Naive thymus-derived CD4-positive, alpha-beta T cell (primary cell): ENCODE measurements at regions of chr2 and their contacts with region 1.

Region 1: GRCh38 chr2:98465456-98466226 is 21.0 kb downstream of the INPP4A start:
- DNase-seq: peak; percentile 53 to 92 (median 85)
- ATAC-seq: peak; percentile 74
- H3K4me3 ChIP-seq: peak overlapping the region; percentile 61
- H3K4me3 Mint-ChIP-seq: peak overlapping the region; percentile 78 to 98 (median 87)
- H3K27ac ChIP-seq: peak overlapping the region; percentile 85
- H3K27ac Mint-ChIP-seq: peak overlapping the region; percentile 93 to 99 (median 96)
- H3K4me1 ChIP-seq: peaks cover 85 to 87% of the 10 kb centered on the region in 2 donors
- H3K4me1 Mint-ChIP-seq: peaks cover 70 to 95% (median 88%) of the 10 kb centered on the region in 7 donors
- H3K27me3 ChIP-seq: no peaks in the 10 kb centered on the region
- H3K27me3 Mint-ChIP-seq: no peaks in the 10 kb centered on the region

Region 2: GRCh38 chr2:98438190-98439133 is 27.2 kb before region 1 on chr2:
- CTCF ChIA-PET with region 1: no interaction called
- POLR2A ChIA-PET with region 1: interaction called, 7 read pairs
- intact Hi-C with region 1: loop called in 1 of 2 experiments (anchors 1 kb)
- DNase-seq: peak in 1 of 9 donors; percentile 40
- ATAC-seq: peak; percentile 82
- H3K4me3 ChIP-seq: no peak overlapping the region
- H3K4me3 Mint-ChIP-seq: peak overlapping the region in 1 of 10 donors; percentile 74
- H3K27ac ChIP-seq: no peak overlapping the region
- H3K27ac Mint-ChIP-seq: peak overlapping the region in 6 of 9 donors; percentile 1 to 92 (median 8)
- H3K4me1 ChIP-seq: no peaks in the 10 kb centered on the region
- H3K4me1 Mint-ChIP-seq: peaks cover 0 to 35% (median 5%) of the 10 kb centered on the region in 7 donors
- H3K27me3 ChIP-seq: no peaks in the 10 kb centered on the region
- H3K27me3 Mint-ChIP-seq: no peaks in the 10 kb centered on the region

Region 3: GRCh38 chr2:98455494-98455976 is 10.1 kb before region 1 on chr2:
- CTCF ChIA-PET with region 1: interaction called, 10 read pairs
- POLR2A ChIA-PET with region 1: interaction called, 140 read pairs
- intact Hi-C with region 1: loop called (anchors 1 kb)
- DNase-seq: peak in 5 of 9 donors; percentile 52 to 71 (median 54)
- ATAC-seq: peak; percentile 72
- H3K4me3 ChIP-seq: peak overlapping the region; percentile 10
- H3K4me3 Mint-ChIP-seq: peak overlapping the region; percentile 56 to 96 (median 78)
- H3K27ac ChIP-seq: peak overlapping the region; percentile 68
- H3K27ac Mint-ChIP-seq: peak overlapping the region; percentile 88 to 98 (median 93)
- H3K4me1 ChIP-seq: peaks cover 90 to 96% of the 10 kb centered on the region in 2 donors
- H3K4me1 Mint-ChIP-seq: peaks cover 82 to 100% (median 96%) of the 10 kb centered on the region in 7 donors
- H3K27me3 ChIP-seq: no peaks in the 10 kb centered on the region
- H3K27me3 Mint-ChIP-seq: no peaks in the 10 kb centered on the region

Region 4: GRCh38 chr2:98479959-98480524 is 14.4 kb after region 1 on chr2:
- CTCF ChIA-PET with region 1: interaction called, 28 read pairs
- POLR2A ChIA-PET with region 1: interaction called, 99 read pairs
- intact Hi-C with region 1: loop called (anchors 1 to 2 kb)
- DNase-seq: peak in 1 of 9 donors; percentile 70
- ATAC-seq: peak; percentile 58
- H3K4me3 ChIP-seq: peak overlapping the region; percentile 8
- H3K4me3 Mint-ChIP-seq: peak overlapping the region; percentile 41 to 82 (median 72)
- H3K27ac ChIP-seq: peak overlapping the region; percentile 64
- H3K27ac Mint-ChIP-seq: peak overlapping the region; percentile 81 to 95 (median 91)
- H3K4me1 ChIP-seq: peaks cover 87 to 97% of the 10 kb centered on the region in 2 donors
- H3K4me1 Mint-ChIP-seq: peaks cover 80 to 100% (median 98%) of the 10 kb centered on the region in 7 donors
- H3K27me3 ChIP-seq: no peaks in the 10 kb centered on the region
- H3K27me3 Mint-ChIP-seq: no peaks in the 10 kb centered on the region

Region 5: GRCh38 chr2:98487806-98488651 is 22.4 kb after region 1 on chr2:
- CTCF ChIA-PET with region 1: interaction called, 26 read pairs
- POLR2A ChIA-PET with region 1: interaction called, 99 read pairs
- intact Hi-C with region 1: loop called in 1 of 2 experiments (anchors 1 kb)
- DNase-seq: peak in 7 of 9 donors; percentile 49 to 68 (median 59)
- ATAC-seq: peak; percentile 90
- H3K4me3 ChIP-seq: no peak overlapping the region
- H3K4me3 Mint-ChIP-seq: peak overlapping the region; percentile 16 to 82 (median 58)
- H3K27ac ChIP-seq: peak overlapping the region; percentile 23
- H3K27ac Mint-ChIP-seq: peak overlapping the region; percentile 38 to 93 (median 75)
- H3K4me1 ChIP-seq: peaks cover 69 to 76% of the 10 kb centered on the region in 2 donors
- H3K4me1 Mint-ChIP-seq: peaks cover 56 to 100% (median 99%) of the 10 kb centered on the region in 7 donors
- H3K27me3 ChIP-seq: no peaks in the 10 kb centered on the region
- H3K27me3 Mint-ChIP-seq: no peaks in the 10 kb centered on the region

Region 6: DNA sequence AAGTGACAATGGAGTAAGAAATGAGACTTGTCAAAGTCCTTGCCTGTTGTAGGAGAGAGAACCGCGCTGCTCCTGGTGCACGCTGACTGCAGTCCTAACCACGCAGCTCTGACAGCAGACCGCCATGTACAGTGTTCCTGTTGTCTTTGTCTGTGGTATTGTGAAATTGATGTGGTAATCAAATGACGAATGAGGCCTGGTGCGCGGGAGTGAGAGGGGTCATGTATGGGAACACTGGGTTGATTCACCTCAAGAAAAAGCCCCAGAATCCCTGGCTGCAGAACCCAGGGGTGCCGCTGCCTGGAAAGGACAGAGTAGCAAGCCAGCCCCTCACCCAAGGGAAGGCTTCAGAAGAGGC is 43.0 kb after region 1 on chr2:
- CTCF ChIA-PET with region 1: interaction called, 3 read pairs
- POLR2A ChIA-PET with region 1: interaction called, 24 read pairs
- intact Hi-C with region 1: loop called in 1 of 2 experiments (anchors 5 kb)
- DNase-seq: peak in 8 of 9 donors; percentile 52 to 75 (median 63)
- ATAC-seq: peak; percentile 81
- H3K4me3 ChIP-seq: no peak overlapping the region
- H3K4me3 Mint-ChIP-seq: peak overlapping the region; percentile 22 to 72 (median 54)
- H3K27ac ChIP-seq: peak overlapping the region; percentile 50
- H3K27ac Mint-ChIP-seq: peak overlapping the region; percentile 72 to 92 (median 86)
- H3K4me1 ChIP-seq: peaks cover 49 to 85% of the 10 kb centered on the region in 2 donors
- H3K4me1 Mint-ChIP-seq: peaks cover 82 to 100% (median 98%) of the 10 kb centered on the region in 7 donors
- H3K27me3 ChIP-seq: no peaks in the 10 kb centered on the region
- H3K27me3 Mint-ChIP-seq: no peaks in the 10 kb centered on the region

Region 7: DNA sequence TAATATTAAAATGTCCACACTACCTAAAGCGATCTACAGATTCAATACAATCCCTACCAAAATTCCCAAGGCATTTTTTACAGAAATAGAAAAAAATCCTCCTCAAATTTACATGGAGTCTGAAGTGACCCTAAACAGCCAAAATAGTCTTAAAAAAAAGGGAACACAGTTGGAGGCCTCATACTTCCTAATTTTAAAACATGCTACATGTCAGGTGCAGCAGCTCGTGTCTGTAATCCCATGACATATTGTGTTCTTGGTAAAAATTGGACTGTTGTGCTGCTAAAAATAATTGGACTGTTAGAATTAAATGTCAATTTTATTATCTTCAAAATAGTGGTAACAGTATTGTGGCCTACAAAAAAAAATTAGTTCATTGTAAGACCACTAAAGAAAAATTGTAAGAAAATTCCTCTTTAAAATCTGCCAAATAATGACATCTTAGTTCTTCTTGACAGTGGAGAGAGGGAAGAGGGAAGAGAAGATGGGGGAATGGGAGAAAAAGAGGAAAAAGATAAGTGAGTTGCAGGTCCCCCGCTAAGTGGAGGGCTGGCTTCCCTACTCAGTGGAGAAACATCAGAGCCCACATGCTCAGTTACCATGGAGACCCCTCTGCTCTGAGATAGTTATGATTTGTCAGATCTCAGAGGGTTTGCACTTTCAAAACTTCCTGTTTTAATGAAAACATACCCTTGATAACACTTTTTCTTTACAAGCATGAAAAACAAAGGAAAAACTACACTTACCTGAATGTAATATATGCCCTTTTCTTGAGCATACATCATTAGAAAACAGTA is 189.3 kb after region 1 on chr2:
- CTCF ChIA-PET with region 1: no interaction called
- POLR2A ChIA-PET with region 1: interaction called, 3 read pairs
- intact Hi-C with region 1: loop called in 1 of 2 experiments (anchors 5 kb)
- DNase-seq: peak in 7 of 9 donors; percentile 52 to 80 (median 75)
- ATAC-seq: peak; percentile 72
- H3K4me3 ChIP-seq: peak overlapping the region; percentile 4
- H3K4me3 Mint-ChIP-seq: peak overlapping the region; percentile 40 to 81 (median 69)
- H3K27ac ChIP-seq: peak overlapping the region; percentile 79
- H3K27ac Mint-ChIP-seq: peak overlapping the region; percentile 76 to 99 (median 93)
- H3K4me1 ChIP-seq: peaks cover 64 to 85% of the 10 kb centered on the region in 2 donors
- H3K4me1 Mint-ChIP-seq: peaks cover 50 to 97% (median 88%) of the 10 kb centered on the region in 7 donors
- H3K27me3 ChIP-seq: no peaks in the 10 kb centered on the region
- H3K27me3 Mint-ChIP-seq: no peaks in the 10 kb centered on the region